ENCODE measurements at regions of chr9 and their contacts with region 1.

Region 1: DNA sequence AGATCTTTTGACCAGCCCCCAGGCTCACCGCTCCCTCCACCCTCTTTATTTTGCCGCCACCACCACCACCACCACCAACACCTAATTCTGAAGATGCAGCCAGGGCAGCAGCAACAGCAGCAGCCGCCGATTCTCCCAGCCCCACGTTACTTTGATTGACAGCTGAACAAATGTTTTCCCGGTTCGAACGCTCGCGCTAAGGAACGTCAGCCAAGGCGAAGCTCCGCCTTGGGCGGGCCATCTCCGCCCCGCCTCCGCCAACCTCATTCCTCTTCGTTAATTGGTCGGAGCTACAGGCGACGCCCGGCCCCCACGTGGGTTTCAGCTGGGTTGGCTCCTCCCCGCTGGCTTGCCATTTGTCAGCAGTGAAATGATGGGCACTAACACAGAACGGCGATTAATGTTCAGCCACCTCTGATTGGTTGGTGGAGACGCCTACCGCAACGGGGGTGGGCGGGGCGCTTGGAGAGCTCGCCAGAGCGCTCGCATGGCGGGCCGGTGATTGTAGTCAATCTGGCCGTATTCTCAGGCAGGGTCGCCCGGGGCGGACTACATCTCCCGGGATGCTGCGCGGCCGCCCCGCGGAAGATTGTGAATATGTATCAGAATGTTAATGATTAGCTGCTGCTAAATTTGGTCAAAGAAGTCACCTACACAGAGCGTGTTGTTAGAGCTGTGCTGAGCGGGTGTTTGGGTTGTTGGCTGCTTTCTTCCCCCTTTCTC is at the start of gene TLE4:
- DNase-seq: peak; percentile 100
- H3K4me3 ChIP-seq: peak within 1 kb of the TSS; percentile 81 to 99 (median 88)
- H3K27ac ChIP-seq: peak within 1 kb of the TSS; percentile 97
- H3K4me1 ChIP-seq: peaks cover 16% of the 10 kb centered on the region
- H3K27me3 ChIP-seq: no peaks in the 10 kb centered on the region
- CTCF ChIP-seq: no peak
- total RNA-seq, gene TLE4: 32.8 to 38.4 TPM

Region 2: GRCh38 chr9:79129865-79130480 is 441.5 kb before region 1 on chr9:
- CTCF ChIA-PET with region 1: no interaction called
- dilution Hi-C with region 1: no loop called
- in situ Hi-C with region 1: no loop called
- intact Hi-C with region 1: loop called (anchors 2 kb)
- DNase-seq: peak; percentile 21
- H3K4me3 ChIP-seq: no peak overlapping the region
- H3K27ac ChIP-seq: no peak overlapping the region
- H3K4me1 ChIP-seq: no peaks in the 10 kb centered on the region
- H3K27me3 ChIP-seq: no peaks in the 10 kb centered on the region
- CTCF ChIP-seq: peak; percentile 79 to 92

Region 3: GRCh38 chr9:79477955-79478771 is 93.3 kb before region 1 on chr9:
- CTCF ChIA-PET with region 1: no interaction called
- dilution Hi-C with region 1: no loop called
- in situ Hi-C with region 1: no loop called
- intact Hi-C with region 1: loop called (anchors 2 kb)
- DNase-seq: peak; percentile 89
- H3K4me3 ChIP-seq: no peak overlapping the region
- H3K27ac ChIP-seq: peak overlapping the region; percentile 7
- H3K4me1 ChIP-seq: peaks cover 12% of the 10 kb centered on the region
- H3K27me3 ChIP-seq: no peaks in the 10 kb centered on the region
- CTCF ChIP-seq: peak in 1 of 2 donors; percentile 13

Region 4: GRCh38 chr9:79651251-79651795 is 79.9 kb after region 1 on chr9:
- CTCF ChIA-PET with region 1: no interaction called
- dilution Hi-C with region 1: no loop called
- in situ Hi-C with region 1: no loop called
- intact Hi-C with region 1: no loop called
- DNase-seq: no peak
- H3K4me3 ChIP-seq: no peak overlapping the region
- H3K27ac ChIP-seq: no peak overlapping the region
- H3K4me1 ChIP-seq: peaks cover 3% of the 10 kb centered on the region
- H3K27me3 ChIP-seq: no peaks in the 10 kb centered on the region
- CTCF ChIP-seq: no peak

Region 5: DNA sequence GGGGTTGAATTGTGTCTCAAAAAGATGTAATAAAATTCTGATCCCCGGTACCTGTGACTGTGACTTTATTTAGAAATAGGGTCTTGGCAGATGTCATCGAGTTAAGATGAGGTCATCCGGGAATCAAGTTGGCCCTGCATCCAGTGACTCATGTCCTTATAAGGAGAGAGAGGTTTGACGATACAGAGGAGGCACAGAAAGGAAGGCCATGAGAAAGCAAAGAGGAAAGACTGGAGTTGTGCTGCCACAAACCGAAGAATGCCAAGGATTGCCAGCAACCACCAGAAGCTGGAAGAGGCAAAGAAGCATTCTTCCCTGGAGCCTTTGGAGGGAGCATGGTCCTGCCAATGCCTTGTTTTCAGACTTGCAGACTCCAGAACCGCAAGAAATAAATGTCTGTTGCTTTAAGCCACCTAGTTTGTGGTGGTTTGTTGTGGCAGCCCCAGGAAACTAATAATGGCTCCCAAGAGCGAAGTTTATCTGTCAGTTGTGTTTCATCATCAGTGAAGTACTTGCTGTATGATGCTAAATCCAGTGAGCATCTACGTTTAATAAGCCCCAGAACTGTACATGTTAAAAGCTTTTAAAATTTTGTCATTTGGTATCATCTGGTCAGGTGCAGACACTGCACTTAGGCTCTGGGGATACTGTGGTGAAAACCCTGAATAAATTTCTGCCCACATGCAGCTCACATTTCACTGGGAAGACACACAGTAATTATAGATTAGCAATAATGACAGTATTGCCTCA is 115.1 kb after region 1 on chr9:
- CTCF ChIA-PET with region 1: no interaction called
- dilution Hi-C with region 1: no loop called
- in situ Hi-C with region 1: loop called in 1 of 2 experiments (anchors 25 kb)
- intact Hi-C with region 1: loop called (anchors 2 kb)
- DNase-seq: peak; percentile 88
- H3K4me3 ChIP-seq: peak overlapping the region in 1 of 3 experiments; percentile 19
- H3K27ac ChIP-seq: peak overlapping the region; percentile 66
- H3K4me1 ChIP-seq: peaks cover 38% of the 10 kb centered on the region
- H3K27me3 ChIP-seq: no peaks in the 10 kb centered on the region
- CTCF ChIP-seq: peak in 1 of 2 donors; percentile 6

Region 6: DNA sequence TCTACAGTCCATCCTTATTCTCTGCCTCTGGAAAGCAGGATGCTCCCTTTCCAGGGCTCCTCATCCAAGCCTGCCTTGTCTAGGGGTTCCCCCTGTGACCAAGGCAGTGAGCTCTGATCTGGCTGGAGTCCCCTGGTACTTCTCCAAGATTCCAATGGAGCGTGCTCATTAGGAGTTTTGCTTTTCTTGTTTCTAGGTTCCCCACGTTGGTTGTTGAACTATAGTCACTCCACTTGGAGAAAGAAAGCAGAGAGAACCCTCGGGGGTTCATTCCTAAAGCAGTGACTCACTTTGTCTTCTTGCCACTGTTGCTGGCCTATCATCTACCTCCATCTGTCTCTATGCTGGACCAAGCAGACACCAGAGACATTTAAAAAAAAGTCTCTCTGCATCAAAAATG is 192.9 kb after region 1 on chr9:
- CTCF ChIA-PET with region 1: no interaction called
- dilution Hi-C with region 1: no loop called
- in situ Hi-C with region 1: no loop called
- intact Hi-C with region 1: loop called (anchors 2 kb)
- DNase-seq: peak; percentile 85
- H3K4me3 ChIP-seq: no peak overlapping the region
- H3K27ac ChIP-seq: no peak overlapping the region
- H3K4me1 ChIP-seq: peaks cover 16% of the 10 kb centered on the region
- H3K27me3 ChIP-seq: no peaks in the 10 kb centered on the region
- CTCF ChIP-seq: no peak

Measured in mammary epithelial cell (primary cell).